Sigmoid colon (tissue), 7 donors: ENCODE measurements at regions of chr10 and their contacts with region 1.

Region 1: GRCh38 chr10:3692387-3692999 is 92.5 kb downstream of the KLF6 start:
- DNase-seq: no peak
- H3K4me3 ChIP-seq: no peak overlapping the region
- H3K27ac ChIP-seq: no peak overlapping the region
- H3K4me1 ChIP-seq: no peaks in the 10 kb centered on the region
- H3K27me3 ChIP-seq: no peaks in the 10 kb centered on the region
- CTCF ChIP-seq: no peak
- EP300 ChIP-seq: no peak
- POLR2A ChIP-seq: no peak

Region 2: DNA sequence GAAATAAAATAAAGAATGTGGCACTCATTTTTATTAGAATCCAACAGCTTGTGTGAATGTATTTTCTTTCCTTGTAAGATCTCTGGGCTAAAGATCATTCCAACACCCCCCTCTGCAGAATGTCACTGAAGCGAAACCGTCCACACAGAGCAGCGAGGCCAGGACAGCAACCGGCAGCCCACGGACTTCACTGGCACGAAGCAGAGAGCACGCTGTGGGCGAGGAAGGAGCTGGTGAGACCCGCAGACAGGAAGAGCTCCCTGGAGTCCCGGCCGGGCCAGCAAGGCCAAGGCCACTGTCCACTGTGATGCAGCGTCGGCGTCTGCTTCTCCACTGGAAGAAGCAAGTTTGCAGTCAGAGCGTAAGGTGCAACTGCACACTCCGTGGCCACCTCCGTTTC is 107.1 kb before region 1 on chr10:
- intact Hi-C with region 1: loop called (anchors 10 kb)
- DNase-seq: no peak
- H3K4me3 ChIP-seq: no peak overlapping the region
- H3K27ac ChIP-seq: no peak overlapping the region
- H3K4me1 ChIP-seq: no peaks in the 10 kb centered on the region
- H3K27me3 ChIP-seq: no peaks in the 10 kb centered on the region
- CTCF ChIP-seq: no peak
- EP300 ChIP-seq: no peak
- POLR2A ChIP-seq: no peak